Calu3 (cell line): ENCODE measurements at regions of chr15 and their contacts with region 1.

Region 1: GRCh38 chr15:59917504-59918157 is 86.5 kb upstream of the FOXB1 start:
- DNase-seq: peak; percentile 94
- H3K4me3 Mint-ChIP-seq: no peak overlapping the region
- H3K27ac Mint-ChIP-seq: no peak overlapping the region
- H3K4me1 Mint-ChIP-seq: peaks cover 25% of the 10 kb centered on the region
- H3K27me3 Mint-ChIP-seq: peaks cover 36% of the 10 kb centered on the region
- CTCF ChIP-seq: peak; percentile 75

Region 2: DNA sequence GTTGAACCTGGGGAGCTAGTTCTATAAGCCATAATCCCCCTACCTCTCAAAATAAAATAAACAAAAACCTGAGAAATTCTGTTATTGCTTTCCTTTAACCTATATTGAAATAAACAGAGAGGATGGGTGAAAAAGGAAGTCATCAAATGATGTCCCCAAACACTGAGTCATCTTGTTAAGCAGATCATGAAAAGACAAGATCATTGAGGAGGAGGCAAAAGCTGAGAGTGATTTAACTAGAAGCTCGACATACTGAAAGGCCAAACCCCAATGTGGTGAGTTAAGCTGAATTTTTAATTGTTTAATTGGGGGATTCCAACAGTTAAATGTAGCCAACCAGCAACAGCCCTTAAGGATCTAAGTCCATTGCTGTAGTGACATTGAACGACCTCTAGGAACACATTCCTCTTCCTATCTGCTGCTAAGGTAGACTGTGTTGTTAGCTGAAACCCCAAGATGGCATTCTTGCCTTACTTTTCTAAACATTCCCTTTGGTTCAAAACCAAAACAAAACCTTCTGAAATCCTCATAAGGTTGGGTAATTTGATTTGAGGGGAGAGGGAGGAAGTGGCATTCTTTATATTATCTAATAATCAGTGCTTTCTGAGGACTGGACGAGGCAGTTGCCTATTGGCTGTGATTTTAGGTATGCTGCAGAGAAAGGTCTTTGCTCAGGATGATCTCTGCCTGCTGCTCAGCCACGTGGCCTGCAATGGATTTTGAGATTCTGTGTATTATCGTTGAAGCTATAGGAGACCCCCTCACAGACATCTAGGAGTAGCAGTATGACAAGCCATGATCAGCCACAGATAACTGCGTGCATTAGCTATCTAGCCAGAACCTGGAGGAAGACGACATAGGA is 165.8 kb before region 1 on chr15:
- CTCF ChIA-PET with region 1: no interaction called
- intact Hi-C with region 1: loop called (anchors 5 kb)
- DNase-seq: no peak
- H3K4me3 Mint-ChIP-seq: no peak overlapping the region
- H3K27ac Mint-ChIP-seq: no peak overlapping the region
- H3K4me1 Mint-ChIP-seq: peaks cover 20% of the 10 kb centered on the region
- H3K27me3 Mint-ChIP-seq: peaks cover 51% of the 10 kb centered on the region
- CTCF ChIP-seq: peak; percentile 35

Region 3: DNA sequence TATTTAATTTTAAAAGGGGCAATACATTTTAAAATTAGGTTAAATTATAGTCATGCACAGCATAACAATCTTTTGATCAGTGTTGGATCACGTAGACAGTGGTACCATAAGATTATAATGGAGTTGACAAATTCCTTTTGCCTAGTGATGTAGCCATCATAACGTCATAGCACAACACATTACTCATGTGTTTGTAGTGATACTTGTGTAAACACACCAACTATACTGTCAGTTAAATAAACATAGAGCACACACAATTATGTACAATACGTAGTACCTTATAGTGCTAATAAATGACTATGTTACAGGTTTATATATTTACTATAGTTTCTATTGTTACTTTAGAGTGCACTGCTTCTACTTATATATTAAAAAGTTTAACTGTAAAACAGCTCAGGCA is 117.7 kb after region 1 on chr15:
- CTCF ChIA-PET with region 1: no interaction called
- intact Hi-C with region 1: loop called (anchors 5 kb)
- DNase-seq: no peak
- H3K4me3 Mint-ChIP-seq: no peak overlapping the region
- H3K27ac Mint-ChIP-seq: no peak overlapping the region
- H3K4me1 Mint-ChIP-seq: peaks cover 27% of the 10 kb centered on the region
- H3K27me3 Mint-ChIP-seq: no peaks in the 10 kb centered on the region
- CTCF ChIP-seq: no peak

Region 4: GRCh38 chr15:60128000-60128376 is 210.4 kb after region 1 on chr15:
- CTCF ChIA-PET with region 1: interaction called, 14 read pairs
- intact Hi-C with region 1: loop called (anchors 1 kb)
- DNase-seq: no peak
- H3K4me3 Mint-ChIP-seq: peak overlapping the region; percentile 85
- H3K27ac Mint-ChIP-seq: peak overlapping the region; percentile 73
- H3K4me1 Mint-ChIP-seq: peaks cover 24% of the 10 kb centered on the region
- H3K27me3 Mint-ChIP-seq: peaks cover 15% of the 10 kb centered on the region
- CTCF ChIP-seq: no peak